Activated naive CD4-positive, alpha-beta T cell treated with anti-CD3 and anti-CD28 coated beads for 36 hours (primary cell): ENCODE measurements at regions of chr5 and their contacts with region 1.

Region 1: GRCh38 chr5:69189162-69190086 is at the start of gene CENPH:
- DNase-seq: peak; percentile 96
- H3K4me3 Mint-ChIP-seq: peak within 1 kb of the TSS; percentile 84
- H3K27ac Mint-ChIP-seq: peak within 1 kb of the TSS; percentile 90
- H3K4me1 Mint-ChIP-seq: peaks cover 13% of the 10 kb centered on the region
- H3K27me3 Mint-ChIP-seq: no peaks in the 10 kb centered on the region
- total RNA-seq, gene CENPH: 93.0 to 95.2 TPM

Region 2: DNA sequence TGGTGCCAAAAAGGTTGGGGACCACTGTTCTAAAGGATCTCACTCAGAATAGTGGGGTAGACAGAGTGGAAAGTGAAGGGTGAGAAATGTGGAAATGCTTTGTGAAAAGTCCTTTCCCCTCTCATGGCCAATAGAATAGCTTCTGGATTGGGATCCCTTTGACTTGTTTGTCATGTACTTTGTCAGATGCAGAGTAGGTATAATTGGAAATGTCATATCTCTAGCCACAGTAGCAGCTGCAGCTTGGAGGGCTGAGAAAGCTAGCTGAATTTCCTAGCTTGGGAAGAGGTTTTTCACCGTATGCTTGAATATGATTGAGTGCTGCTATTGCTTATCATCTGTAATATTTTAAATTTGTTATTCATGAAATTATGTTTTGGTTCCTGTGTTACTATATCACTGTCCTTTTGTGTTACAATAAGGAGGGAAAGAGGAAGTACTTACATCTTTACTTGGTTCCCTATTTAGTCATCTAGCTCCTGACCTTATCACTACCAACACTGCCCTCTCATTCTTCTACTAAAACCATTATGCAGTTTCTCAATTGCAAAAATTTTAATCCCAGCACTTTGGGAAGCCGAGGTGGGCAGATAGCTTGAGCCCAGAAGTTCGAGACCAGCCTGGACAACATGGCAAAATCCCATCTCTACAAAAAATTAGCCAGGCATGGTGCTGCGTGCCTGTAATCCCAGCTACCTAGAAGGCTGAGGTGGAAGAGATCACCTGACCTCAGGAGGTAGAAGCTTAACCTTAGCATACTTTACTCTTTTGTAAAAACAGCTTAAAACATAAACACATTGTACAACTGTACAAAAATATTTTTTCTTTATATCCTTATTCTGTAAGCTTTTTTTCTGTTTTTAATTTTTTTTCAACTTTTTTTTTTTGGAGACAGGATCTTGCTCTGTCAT is 83.2 kb before region 1 on chr5:
- CTCF ChIA-PET with region 1: no interaction called
- intact Hi-C with region 1: no loop called
- DNase-seq: no peak
- H3K4me3 Mint-ChIP-seq: no peak overlapping the region
- H3K27ac Mint-ChIP-seq: no peak overlapping the region
- H3K4me1 Mint-ChIP-seq: peaks cover 3% of the 10 kb centered on the region
- H3K27me3 Mint-ChIP-seq: no peaks in the 10 kb centered on the region

Region 3: DNA sequence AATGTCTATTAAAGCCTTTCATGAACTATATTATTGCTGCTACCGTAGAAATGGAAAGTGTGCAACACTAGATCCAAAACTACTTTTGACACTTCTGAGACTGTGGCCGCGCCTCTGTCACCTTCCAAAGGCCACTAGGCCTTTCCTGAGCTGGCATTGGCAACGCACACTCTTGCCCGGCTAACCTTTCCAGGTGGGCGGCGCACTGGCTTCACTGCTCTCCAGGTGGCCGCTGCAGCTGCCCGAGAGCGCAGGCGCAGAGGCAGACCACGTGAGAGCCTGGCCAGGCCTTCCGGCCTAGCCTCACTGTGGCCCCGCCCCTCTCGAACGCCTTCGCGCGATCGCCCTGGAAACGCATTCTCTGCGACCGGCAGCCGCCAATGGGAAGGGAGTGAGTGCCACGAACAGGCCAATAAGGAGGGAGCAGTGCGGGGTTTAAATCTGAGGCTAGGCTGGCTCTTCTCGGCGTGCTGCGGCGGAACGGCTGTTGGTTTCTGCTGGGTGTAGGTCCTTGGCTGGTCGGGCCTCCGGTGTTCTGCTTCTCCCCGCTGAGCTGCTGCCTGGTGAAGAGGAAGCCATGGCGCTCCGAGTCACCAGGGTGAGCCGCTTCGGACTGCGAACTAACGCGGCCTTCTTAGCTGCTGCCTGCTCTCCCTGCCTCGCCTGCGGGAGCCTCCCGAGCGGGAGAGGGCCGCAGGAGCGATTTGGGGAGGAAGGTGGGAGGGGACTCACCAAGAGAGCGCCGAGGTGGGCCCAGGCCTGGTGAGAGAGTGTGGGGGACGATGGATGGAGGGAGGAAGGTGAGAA is 22.5 kb before region 1 on chr5 and contains the start of gene CCNB1:
- CTCF ChIA-PET with region 1: interaction called, 4 read pairs
- intact Hi-C with region 1: loop called (anchors 1 kb)
- DNase-seq: peak; percentile 99
- H3K4me3 Mint-ChIP-seq: peak within 1 kb of the TSS; percentile 95
- H3K27ac Mint-ChIP-seq: peak within 1 kb of the TSS; percentile 87
- H3K4me1 Mint-ChIP-seq: peaks cover 20% of the 10 kb centered on the region
- H3K27me3 Mint-ChIP-seq: no peaks in the 10 kb centered on the region
- total RNA-seq, gene CCNB1: 209 to 211 TPM

Region 4: GRCh38 chr5:69217548-69218526 is 28.4 kb after region 1 on chr5:
- CTCF ChIA-PET with region 1: no interaction called
- intact Hi-C with region 1: loop called (anchors 1 kb)
- DNase-seq: peak; percentile 93
- H3K4me3 Mint-ChIP-seq: peak overlapping the region; percentile 99
- H3K27ac Mint-ChIP-seq: peak overlapping the region; percentile 93
- H3K4me1 Mint-ChIP-seq: peaks cover 14% of the 10 kb centered on the region
- H3K27me3 Mint-ChIP-seq: no peaks in the 10 kb centered on the region

Region 5: DNA sequence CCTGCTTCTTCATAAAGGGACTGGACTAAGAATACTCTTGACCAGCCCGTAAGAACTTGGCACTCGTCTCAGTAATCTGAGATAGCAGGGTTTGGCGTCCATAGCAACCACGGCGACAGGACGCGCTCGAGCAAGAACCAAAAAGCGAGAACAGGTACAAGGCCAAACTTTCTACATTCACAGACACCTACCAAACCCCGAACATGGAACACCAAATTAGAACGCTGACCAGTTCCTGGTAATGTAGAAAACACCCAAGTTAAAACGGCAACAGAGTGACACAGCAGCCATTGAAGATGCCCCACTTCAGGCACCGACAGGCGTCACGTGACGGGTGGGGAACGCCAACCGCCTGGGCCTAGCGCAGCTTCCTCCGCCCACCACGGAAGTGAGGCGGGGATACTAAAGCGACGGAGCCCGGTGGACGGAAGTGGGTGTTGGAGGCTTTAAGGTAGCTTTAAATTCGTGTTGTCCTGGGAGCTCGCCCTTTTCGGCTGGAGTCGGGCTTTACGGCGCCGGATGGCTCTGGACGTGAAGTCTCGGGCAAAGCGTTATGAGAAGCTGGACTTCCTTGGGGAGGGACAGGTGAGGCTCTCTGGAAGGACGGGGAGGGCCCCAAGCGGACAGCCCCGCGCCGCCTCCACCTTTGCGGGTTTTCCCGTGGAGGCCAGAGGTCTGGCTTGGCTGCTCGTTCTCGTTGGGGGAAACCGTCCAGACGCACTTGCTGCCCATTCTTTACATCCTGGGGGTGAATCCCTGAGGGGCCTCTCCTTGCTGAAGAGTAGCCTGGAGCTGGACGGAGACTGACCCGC is 45.2 kb after region 1 on chr5 and contains the start of gene CDK7:
- CTCF ChIA-PET with region 1: no interaction called
- intact Hi-C with region 1: loop called (anchors 2 kb)
- DNase-seq: peak; percentile 95
- H3K4me3 Mint-ChIP-seq: peak within 1 kb of the TSS; percentile 97
- H3K27ac Mint-ChIP-seq: peak within 1 kb of the TSS; percentile 77
- H3K4me1 Mint-ChIP-seq: peaks cover 33% of the 10 kb centered on the region
- H3K27me3 Mint-ChIP-seq: no peaks in the 10 kb centered on the region
- total RNA-seq, gene CDK7: 23.8 to 28.4 TPM

Region 6: GRCh38 chr5:69334793-69335268 is 145.4 kb after region 1 on chr5:
- CTCF ChIA-PET with region 1: interaction called, 4 read pairs
- intact Hi-C with region 1: loop called (anchors 1 kb)
- DNase-seq: peak; percentile 88
- H3K4me3 Mint-ChIP-seq: peak overlapping the region; percentile 24
- H3K27ac Mint-ChIP-seq: no peak overlapping the region
- H3K4me1 Mint-ChIP-seq: peaks cover 13% of the 10 kb centered on the region
- H3K27me3 Mint-ChIP-seq: no peaks in the 10 kb centered on the region

Region 7: GRCh38 chr5:69369369-69370121 is 180.1 kb after region 1 on chr5 and contains the starts of genes AK6, RAD17 and TAF9:
- CTCF ChIA-PET with region 1: interaction called, 4 read pairs
- intact Hi-C with region 1: loop called (anchors 1 kb)
- DNase-seq: peak; percentile 94
- H3K4me3 Mint-ChIP-seq: peak within 1 kb of the TSS; percentile 96
- H3K27ac Mint-ChIP-seq: peak within 1 kb of the TSS; percentile 96
- H3K4me1 Mint-ChIP-seq: peaks cover 42% of the 10 kb centered on the region
- H3K27me3 Mint-ChIP-seq: no peaks in the 10 kb centered on the region
- total RNA-seq, gene AK6: 102 to 103 TPM
- total RNA-seq, gene RAD17: 24.1 to 26.2 TPM
- total RNA-seq, gene TAF9: 74.9 to 79.1 TPM